GM12878 (cell line): ENCODE measurements at regions of chr20 and their contacts with region 1.

Region 1: GRCh38 chr20:49676581-49677291 is 36.9 kb downstream of the B4GALT5 start:
- DNase-seq: peak; percentile 82
- ATAC-seq: peak; percentile 79
- H3K4me3 ChIP-seq: peak overlapping the region; percentile 41
- H3K27ac ChIP-seq: peak overlapping the region; percentile 87
- H3K4me1 ChIP-seq: peaks cover 78% of the 10 kb centered on the region
- H3K27me3 ChIP-seq: no peaks in the 10 kb centered on the region
- CTCF ChIP-seq: no peak
- EP300 ChIP-seq: peak; percentile 40 to 87; a peak in 3 of 4 replicates
- POLR2A ChIP-seq: no peak
- RAD21 ChIP-seq: 0 out of 2 replicates have a peak, but pooled peaks have one; percentile 6

Region 2: DNA sequence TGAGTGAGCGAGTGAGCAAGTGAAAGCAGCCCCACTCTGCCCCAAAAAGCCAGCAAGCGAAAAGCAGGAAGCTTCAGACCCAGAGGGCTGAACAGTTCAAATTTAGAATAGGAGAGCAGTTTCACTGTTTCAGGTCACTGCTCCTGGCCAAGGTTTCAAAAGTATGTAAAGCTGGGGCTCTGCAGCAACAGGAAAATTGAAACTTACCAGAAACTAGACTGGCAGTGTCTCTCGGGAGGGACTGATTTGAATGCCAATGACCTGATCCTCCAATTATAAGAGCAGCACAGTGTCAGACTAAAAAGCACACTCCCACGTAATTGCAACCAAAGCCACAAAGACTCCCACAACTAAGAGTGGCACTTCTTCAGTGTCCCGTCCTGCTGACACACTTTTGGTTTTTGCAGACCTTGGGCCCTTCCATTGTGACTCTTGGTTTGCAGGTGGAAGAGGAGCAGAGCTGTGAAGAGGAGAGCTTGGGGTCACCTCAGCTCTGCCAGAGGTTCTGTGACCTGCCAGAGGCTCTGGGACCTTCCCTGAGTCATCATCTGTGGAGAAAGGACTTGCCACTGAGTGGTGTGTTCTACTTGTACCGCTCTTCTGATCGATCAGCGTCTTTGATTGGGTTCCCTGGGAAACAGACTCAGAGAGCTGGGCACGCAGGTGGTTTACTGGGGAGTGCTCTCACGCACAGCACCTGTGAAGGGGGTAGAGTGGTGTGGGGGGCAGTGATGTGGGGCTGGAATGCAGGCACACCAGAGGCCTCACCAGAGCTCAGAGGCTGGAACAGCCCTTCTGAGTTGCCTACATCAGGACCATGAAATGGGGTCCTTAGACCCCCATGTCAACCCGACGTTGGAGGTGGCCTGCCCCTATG is 56.1 kb before region 1 on chr20:
- CTCF ChIA-PET with region 1: interaction called, 6 read pairs
- POLR2A ChIA-PET with region 1: interaction called, 3 read pairs
- RAD21 ChIA-PET with region 1: interaction called, 11 read pairs
- SMC1A ChIA-PET with region 1: interaction called, 110 read pairs
- in situ Hi-C with region 1: no loop called
- intact Hi-C with region 1: loop called (anchors 2 kb)
- DNase-seq: peak; percentile 100
- ATAC-seq: peak; percentile 92
- H3K4me3 ChIP-seq: peak overlapping the region; percentile 8; the same call in 1 of the 2 replicates
- H3K27ac ChIP-seq: peak overlapping the region; percentile 57
- H3K4me1 ChIP-seq: peaks cover 37% of the 10 kb centered on the region
- H3K27me3 ChIP-seq: no peaks in the 10 kb centered on the region
- CTCF ChIP-seq: no peak
- EP300 ChIP-seq: peak; percentile 91 to 92
- POLR2A ChIP-seq: no peak
- RAD21 ChIP-seq: peak; percentile 17; the same call in 1 of the 2 replicates

Region 3: GRCh38 chr20:49690899-49691620 is 14.3 kb after region 1 on chr20:
- CTCF ChIA-PET with region 1: interaction called, 16 read pairs
- POLR2A ChIA-PET with region 1: interaction called, 34 read pairs
- RAD21 ChIA-PET with region 1: interaction called, 22 read pairs
- SMC1A ChIA-PET with region 1: interaction called, 60 read pairs
- in situ Hi-C with region 1: no loop called
- intact Hi-C with region 1: no loop called
- DNase-seq: no peak
- ATAC-seq: peak; percentile 42
- H3K4me3 ChIP-seq: no peak overlapping the region
- H3K27ac ChIP-seq: peak overlapping the region; percentile 12; the same call in 1 of the 2 replicates
- H3K4me1 ChIP-seq: peaks cover 52% of the 10 kb centered on the region
- H3K27me3 ChIP-seq: no peaks in the 10 kb centered on the region
- CTCF ChIP-seq: no peak
- EP300 ChIP-seq: no peak
- POLR2A ChIP-seq: no peak
- RAD21 ChIP-seq: no peak

Region 4: GRCh38 chr20:49706630-49707091 is 29.9 kb after region 1 on chr20:
- CTCF ChIA-PET with region 1: interaction called, 8 read pairs
- POLR2A ChIA-PET with region 1: interaction called, 11 read pairs
- RAD21 ChIA-PET with region 1: interaction called, 38 read pairs
- SMC1A ChIA-PET with region 1: interaction called, 89 read pairs
- in situ Hi-C with region 1: no loop called
- intact Hi-C with region 1: no loop called
- DNase-seq: no peak
- ATAC-seq: peak; percentile 32
- H3K4me3 ChIP-seq: 0 out of 2 replicates have a peak overlapping the region, but pooled peaks have one; percentile 1
- H3K27ac ChIP-seq: peak overlapping the region; percentile 67
- H3K4me1 ChIP-seq: peaks cover 15% of the 10 kb centered on the region
- H3K27me3 ChIP-seq: no peaks in the 10 kb centered on the region
- CTCF ChIP-seq: no peak
- EP300 ChIP-seq: no peak
- POLR2A ChIP-seq: no peak
- RAD21 ChIP-seq: no peak

Region 5: GRCh38 chr20:49762940-49763766 is 86.4 kb after region 1 on chr20:
- CTCF ChIA-PET with region 1: no interaction called
- POLR2A ChIA-PET with region 1: no interaction called
- RAD21 ChIA-PET with region 1: no interaction called
- SMC1A ChIA-PET with region 1: no interaction called
- in situ Hi-C with region 1: no loop called
- intact Hi-C with region 1: no loop called
- DNase-seq: no peak
- ATAC-seq: no peak
- H3K4me3 ChIP-seq: no peak overlapping the region
- H3K27ac ChIP-seq: no peak overlapping the region
- H3K4me1 ChIP-seq: no peaks in the 10 kb centered on the region
- H3K27me3 ChIP-seq: no peaks in the 10 kb centered on the region
- CTCF ChIP-seq: no peak
- EP300 ChIP-seq: no peak
- POLR2A ChIP-seq: no peak
- RAD21 ChIP-seq: no peak

Region 6: DNA sequence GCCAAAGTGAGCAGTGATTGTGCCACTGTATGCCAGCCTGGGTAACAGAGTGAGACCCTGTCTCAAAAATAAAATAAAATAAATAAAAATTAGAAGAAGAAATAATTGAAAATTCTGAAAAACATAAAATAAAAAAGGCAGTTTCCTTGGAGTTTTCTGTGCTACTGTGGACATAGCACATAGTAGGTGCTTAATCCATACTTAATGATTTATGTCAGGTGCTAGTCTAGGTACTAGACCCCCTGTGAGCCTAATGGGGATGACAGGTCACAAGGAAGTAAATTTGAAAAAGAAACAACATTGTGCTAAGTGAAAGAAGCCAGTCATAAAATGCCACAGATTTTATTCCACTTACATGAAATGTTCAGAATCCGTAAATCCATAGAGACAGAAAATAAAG is 126.7 kb after region 1 on chr20:
- CTCF ChIA-PET with region 1: interaction called, 4 read pairs
- POLR2A ChIA-PET with region 1: interaction called, 7 read pairs
- RAD21 ChIA-PET with region 1: interaction called, 25 read pairs
- SMC1A ChIA-PET with region 1: interaction called, 18 read pairs
- in situ Hi-C with region 1: no loop called
- intact Hi-C with region 1: no loop called
- DNase-seq: no peak
- ATAC-seq: no peak
- H3K4me3 ChIP-seq: no peak overlapping the region
- H3K27ac ChIP-seq: no peak overlapping the region
- H3K4me1 ChIP-seq: peaks cover 43% of the 10 kb centered on the region
- H3K27me3 ChIP-seq: no peaks in the 10 kb centered on the region
- CTCF ChIP-seq: no peak
- EP300 ChIP-seq: no peak
- POLR2A ChIP-seq: no peak
- RAD21 ChIP-seq: no peak